Activated CD4-positive, alpha-beta T cell treated with anti-CD3 and anti-CD28 coated beads for 36 hours (primary cell): ENCODE measurements at regions of chr20 and their contacts with region 1.

Region 1: DNA sequence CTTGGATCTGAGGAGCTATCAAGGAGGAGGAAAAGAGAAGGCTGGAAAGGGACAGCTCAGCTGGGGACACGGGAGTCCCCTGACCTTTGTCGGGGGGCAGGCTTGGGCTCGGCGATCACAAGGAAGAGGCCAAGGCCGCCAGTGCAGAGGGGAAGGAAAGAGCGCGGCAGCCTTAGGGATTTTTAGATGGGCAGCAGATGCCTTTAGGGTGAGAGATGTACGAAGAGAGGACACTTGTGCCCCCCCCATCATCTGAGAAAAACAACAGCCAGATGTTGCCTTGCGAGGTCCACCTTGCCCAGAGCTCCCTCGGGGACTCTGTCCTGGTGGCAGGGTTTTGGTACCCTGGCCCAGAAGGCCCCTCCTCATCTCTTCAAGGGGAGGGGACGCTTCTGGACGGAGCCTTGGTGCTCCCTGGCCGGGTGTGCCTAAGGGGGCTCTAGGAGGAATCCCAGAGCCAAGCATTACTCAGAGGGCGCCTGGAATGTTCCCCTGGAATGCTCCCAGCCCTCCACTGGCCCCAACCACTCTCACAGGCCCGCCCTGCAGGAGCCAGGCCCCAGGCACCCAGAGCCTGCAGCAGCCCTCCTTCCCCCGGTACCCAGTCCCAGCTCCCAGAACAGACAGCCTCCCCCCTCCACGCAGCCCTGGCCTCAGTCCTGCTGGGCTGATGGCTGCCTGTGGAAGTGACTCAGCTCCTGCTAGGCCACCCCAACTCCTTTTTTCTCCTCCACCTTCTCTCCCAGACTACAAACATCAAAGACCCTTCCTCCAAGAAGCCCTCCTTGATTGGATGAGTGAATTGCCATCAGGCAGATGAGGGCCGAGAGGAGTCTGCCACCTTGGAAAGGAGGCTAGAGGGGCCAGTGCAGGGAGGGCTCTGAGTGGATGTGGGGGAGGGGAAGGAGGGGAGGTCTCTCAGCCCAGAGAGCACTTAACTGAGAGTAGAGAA is 1.8 kb downstream of the ADAM33 start:
- DNase-seq: no peak
- ATAC-seq: no peak
- H3K4me3 Mint-ChIP-seq: no peak overlapping the region
- H3K27ac Mint-ChIP-seq: no peak overlapping the region
- H3K4me1 Mint-ChIP-seq: peaks cover 6% of the 10 kb centered on the region
- H3K27me3 Mint-ChIP-seq: peaks cover 37% of the 10 kb centered on the region

Region 2: DNA sequence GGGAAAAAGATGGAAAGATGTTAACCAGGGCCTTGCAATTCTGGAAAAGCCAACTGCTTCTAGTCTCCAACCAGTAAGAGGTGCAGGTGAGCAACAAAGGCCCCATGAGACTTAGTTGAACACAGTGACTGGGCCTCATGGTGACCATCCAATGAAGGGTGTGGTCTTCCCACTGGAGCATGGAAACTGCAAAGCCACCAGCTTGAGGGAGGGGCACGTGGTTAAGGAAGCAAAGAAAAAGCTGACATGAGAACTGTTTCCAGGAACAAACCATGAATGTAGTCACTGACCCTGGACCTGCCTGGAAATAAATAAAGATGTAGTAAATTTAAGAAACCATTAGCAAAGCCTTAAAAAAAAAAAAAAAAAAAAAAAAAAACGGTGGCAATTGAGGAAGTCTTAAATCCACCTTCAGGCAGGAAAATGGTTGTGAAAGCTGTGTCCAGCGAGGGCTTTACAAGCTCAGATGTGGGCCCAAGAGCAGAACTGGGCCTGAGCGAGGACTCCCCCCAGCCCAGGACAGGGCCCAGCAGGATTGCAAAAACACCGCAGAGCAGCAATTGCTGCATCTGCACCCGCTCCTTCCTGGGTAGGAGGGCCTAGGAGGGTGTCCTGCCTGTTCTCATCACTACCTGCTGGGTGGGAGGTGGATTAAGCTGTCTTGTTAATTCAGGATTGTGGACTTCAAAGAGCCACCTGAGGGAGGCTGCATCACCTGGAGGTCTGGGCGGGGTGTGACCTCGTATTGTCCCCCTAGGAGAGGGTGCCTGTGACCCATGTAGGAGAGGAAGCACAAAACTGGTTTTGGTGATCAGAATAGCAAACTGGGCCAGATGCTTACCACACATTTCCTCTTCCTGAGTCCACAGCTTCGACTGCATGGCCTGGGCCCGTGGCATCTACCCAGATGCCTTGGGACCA is 27.1 kb before region 1 on chr20:
- CTCF ChIA-PET with region 1: no interaction called
- POLR2A ChIA-PET with region 1: no interaction called
- intact Hi-C with region 1: no loop called
- DNase-seq: no peak
- ATAC-seq: no peak
- H3K4me3 Mint-ChIP-seq: no peak overlapping the region
- H3K27ac Mint-ChIP-seq: no peak overlapping the region
- H3K4me1 Mint-ChIP-seq: no peaks in the 10 kb centered on the region
- H3K27me3 Mint-ChIP-seq: no peaks in the 10 kb centered on the region

Region 3: DNA sequence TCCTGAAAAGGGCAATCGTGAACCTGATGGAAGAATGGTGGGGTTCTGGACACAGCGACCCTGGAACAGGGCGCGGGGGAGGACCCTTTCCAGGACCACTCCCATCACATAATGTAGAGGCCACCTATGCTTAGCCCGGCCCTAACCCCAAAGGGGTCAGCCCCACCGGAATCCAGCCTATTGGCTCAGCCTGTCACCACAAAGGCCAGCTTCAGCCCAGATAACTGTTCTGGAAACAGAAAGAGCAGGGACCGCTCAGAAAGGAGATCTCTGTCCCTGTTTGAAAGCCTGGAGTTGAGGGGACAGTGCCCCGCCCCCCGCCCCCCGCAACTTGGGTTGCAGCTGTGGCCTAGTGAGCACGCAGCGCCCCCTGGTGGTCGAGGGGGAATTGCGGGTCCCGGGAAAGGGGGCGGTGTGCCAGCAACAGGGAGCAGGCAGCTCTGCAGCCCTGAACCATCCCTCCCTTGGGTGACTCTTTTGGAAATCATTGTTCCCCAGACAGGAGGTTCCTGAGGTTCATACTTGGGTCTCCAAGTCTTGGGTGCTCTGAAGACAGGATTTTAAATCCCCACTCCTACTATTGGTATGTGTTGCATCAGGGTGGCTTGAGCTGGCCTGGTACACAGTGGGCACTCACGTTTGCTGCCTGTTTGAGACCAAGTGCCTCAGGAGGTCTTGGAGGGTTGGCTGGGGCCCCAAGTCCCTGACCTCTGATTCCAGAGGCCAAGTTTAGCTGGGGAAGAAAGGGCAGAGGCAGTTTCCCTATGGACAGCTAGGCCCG is 30.9 kb after region 1 on chr20:
- CTCF ChIA-PET with region 1: interaction called, 36 read pairs
- POLR2A ChIA-PET with region 1: no interaction called
- intact Hi-C with region 1: loop called (anchors 1 kb)
- DNase-seq: peak; percentile 88
- ATAC-seq: peak; percentile 75
- H3K4me3 Mint-ChIP-seq: no peak overlapping the region
- H3K27ac Mint-ChIP-seq: no peak overlapping the region
- H3K4me1 Mint-ChIP-seq: no peaks in the 10 kb centered on the region
- H3K27me3 Mint-ChIP-seq: no peaks in the 10 kb centered on the region

Region 4: DNA sequence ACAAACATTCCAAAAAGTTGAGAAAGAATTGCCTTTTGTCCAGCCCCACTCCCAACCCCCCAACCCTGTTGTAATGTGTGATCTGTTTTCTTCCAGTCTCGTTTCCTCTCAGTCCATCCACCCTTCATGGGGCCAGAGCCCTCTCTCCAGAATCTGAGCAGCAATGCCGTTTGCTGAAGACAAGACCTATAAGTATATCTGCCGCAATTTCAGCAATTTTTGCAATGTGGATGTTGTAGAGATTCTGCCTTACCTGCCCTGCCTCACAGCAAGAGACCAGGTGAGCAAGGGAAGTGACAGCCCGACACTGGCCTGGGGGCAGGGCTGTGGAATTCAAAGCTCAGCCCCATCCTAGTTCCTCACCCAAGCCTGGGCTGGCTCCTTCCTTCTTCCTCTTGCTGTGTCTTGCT is 174.4 kb after region 1 on chr20:
- CTCF ChIA-PET with region 1: interaction called, 7 read pairs
- POLR2A ChIA-PET with region 1: no interaction called
- intact Hi-C with region 1: loop called in 1 of 2 experiments (anchors 1 kb)
- DNase-seq: no peak
- ATAC-seq: no peak
- H3K4me3 Mint-ChIP-seq: no peak overlapping the region
- H3K27ac Mint-ChIP-seq: no peak overlapping the region
- H3K4me1 Mint-ChIP-seq: peaks cover 4% of the 10 kb centered on the region
- H3K27me3 Mint-ChIP-seq: no peaks in the 10 kb centered on the region

Region 5: DNA sequence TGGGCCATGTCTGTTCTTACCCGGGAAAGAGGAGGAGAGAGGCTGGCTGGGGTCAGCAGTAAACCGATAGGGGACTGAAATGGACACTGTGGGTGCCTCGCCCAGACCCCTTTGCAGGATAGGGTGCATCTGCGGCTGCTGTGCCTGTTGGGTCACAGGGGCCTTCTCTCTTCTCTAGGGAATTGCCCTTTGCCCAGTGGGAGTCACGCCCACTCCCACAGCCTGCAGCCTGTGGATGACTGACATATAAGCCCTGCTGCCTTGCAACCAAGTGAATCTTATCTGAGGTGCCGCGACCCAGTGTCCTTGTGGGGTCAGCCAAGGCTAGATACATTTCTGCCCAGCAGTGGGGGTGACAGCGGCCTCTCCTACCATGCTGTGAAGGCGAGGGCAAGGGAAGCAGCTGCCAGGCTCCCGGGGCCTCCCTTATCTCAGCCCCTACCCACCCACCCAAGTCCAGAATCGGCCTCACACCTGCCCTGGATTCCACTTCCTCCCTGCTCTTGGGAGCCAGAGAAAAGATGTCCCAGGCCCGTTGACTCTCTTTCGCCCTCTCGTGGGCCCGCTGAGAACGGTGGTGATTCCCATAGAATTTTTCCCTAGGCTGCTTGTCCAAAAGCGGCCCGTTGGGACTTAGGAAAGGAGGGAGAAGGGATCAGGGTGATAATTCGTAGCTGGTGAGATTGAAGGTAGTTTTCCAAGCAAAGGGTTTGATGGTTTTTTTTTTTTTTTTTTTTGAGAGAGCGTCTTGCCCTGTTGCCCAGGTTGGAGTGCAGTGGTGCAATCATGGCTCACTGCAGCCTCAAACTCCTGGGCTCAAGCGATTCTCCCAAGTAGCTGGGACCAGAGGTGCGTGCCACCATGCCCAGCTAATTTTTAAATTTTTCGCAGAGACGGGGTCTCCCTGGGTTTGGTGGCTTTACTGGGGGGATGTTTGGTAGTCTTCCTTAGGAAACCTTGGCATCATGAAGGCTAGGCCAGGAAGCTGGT is 411.8 kb after region 1 on chr20:
- CTCF ChIA-PET with region 1: no interaction called
- POLR2A ChIA-PET with region 1: no interaction called
- intact Hi-C with region 1: loop called in 1 of 2 experiments (anchors 5 kb)
- DNase-seq: peak; percentile 67
- ATAC-seq: peak; percentile 70
- H3K4me3 Mint-ChIP-seq: no peak overlapping the region
- H3K27ac Mint-ChIP-seq: no peak overlapping the region
- H3K4me1 Mint-ChIP-seq: peaks cover 3% of the 10 kb centered on the region
- H3K27me3 Mint-ChIP-seq: peaks cover 8% of the 10 kb centered on the region